SK-N-SH (cell line): ENCODE measurements at regions of chr12 and their contacts with region 1.

Region 1: DNA sequence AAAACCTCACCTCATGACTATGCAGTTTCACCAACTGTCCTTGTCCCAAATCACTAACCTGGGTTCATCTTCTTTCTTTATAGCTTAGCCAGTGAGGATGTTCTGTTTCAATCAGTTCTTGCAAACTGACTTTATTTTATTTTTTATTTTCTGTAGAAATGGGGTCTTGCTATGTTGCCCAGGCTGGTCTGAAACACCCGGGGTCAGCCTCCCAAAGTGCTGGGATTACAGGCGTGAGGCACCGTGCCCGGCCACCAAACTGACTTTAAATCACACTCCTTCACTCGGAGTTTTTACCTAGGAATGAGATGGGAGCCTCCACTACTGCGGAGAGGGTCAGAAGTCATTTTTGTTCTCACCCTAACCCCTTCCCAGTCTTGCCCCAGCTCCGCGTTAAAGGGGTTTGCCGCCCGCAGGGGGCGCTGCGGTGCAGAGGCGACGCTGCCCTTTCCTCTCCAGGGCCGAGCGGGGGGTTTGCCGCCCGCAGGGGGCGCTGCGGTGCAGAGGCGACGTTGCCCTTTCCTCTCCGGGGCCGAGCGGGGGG is 7.0 kb upstream of the B4GALNT3 start:
- DNase-seq: no peak
- H3K4me3 ChIP-seq: no peak overlapping the region
- H3K27ac ChIP-seq: no peak overlapping the region
- H3K4me1 ChIP-seq: no peaks in the 10 kb centered on the region
- H3K27me3 ChIP-seq: peaks cover 15% of the 10 kb centered on the region
- CTCF ChIP-seq: peak; percentile 17; the same call in 1 of the 2 replicates
- EP300 ChIP-seq: no peak
- RAD21 ChIP-seq: no peak

Region 2: DNA sequence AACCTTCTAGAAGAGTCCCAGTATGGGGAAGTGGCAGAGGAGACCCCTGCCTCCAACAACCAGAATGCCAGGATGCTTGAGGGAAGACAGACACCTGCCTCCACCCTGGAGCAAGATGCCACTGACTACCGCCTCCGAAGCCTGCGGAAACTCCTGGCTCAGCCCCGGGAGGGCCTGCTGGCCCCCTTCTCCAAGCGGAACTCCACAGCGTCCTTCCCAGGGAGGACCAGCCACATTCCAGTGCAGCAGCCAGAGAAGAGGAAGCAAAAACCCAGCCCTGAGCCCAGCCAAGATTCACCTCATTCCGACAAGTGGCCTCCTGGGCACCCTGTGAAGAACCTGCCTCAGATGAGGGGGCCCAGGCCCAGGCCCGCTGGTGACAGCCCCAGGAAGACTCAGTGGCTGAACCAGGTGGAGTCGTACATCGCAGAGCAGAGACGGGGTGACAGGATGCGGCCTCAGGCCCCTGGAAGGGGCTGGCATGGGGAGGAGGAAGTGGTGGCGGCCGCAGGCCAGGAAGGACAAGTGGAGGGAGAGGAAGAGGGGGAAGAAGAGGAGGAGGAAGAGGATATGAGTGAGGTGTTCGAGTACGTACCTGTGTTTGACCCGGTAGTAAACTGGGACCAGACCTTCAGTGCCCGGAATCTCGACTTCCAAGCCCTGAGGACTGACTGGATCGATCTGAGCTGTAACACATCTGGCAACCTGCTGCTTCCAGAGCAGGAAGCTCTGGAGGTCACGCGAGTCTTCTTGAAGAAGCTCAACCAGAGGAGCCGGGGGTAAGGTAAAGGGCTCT is 100.7 kb after region 1 on chr12:
- CTCF ChIA-PET with region 1: interaction called, 560 read pairs
- POLR2A ChIA-PET with region 1: no interaction called
- DNase-seq: no peak
- H3K4me3 ChIP-seq: no peak overlapping the region
- H3K27ac ChIP-seq: no peak overlapping the region
- H3K4me1 ChIP-seq: no peaks in the 10 kb centered on the region
- H3K27me3 ChIP-seq: no peaks in the 10 kb centered on the region; the same call in 1 of the 2 replicates
- CTCF ChIP-seq: no peak
- EP300 ChIP-seq: no peak
- RAD21 ChIP-seq: no peak